GM10248 (cell line): ENCODE measurements at regions of chr1 and their contacts with region 1.

Region 1: GRCh38 chr1:203593723-203594122 is 32.9 kb upstream of the ATP2B4 start:
- DNase-seq: no peak
- CTCF ChIP-seq: peak; percentile 27

Region 2: DNA sequence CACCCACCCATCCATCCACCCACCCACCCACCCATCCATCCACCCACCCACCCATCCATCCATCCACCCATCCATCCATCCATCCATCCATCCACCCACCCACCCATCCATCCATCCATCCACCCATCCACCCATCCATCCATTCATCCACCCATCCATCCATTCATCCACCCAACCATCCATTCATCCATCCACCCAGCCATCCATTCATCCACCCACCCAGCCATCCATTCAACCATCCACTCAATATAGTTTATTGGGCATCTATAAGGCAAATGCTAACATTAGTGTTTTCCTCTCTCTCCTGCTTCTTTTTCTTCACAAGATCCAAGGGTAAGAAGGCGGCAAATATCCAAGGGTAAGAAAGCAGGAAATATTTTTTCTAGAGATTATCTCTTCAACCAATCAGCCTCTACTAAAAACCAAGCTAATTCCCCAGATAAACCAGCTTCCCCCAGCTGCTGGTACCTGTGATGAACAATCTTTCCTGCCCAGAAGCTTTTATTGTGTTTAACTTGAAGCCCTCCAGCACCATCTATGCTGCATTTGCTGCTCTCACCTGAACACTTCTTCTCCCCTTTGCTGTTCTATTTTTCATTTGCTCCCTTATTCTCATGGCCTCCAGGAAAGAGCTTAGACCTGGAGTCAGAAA is 10.3 kb after region 1 on chr1:
- CTCF ChIA-PET with region 1: interaction called, 16 read pairs
- POLR2A ChIA-PET with region 1: no interaction called
- DNase-seq: no peak
- CTCF ChIP-seq: no peak